H1 (cell line): ENCODE measurements at regions of chr3 and their contacts with region 1.

Region 1: GRCh38 chr3:9749645-9750555 is at the start of gene OGG1:
- DNase-seq: peak; percentile 91 to 93
- H3K4me3 ChIP-seq: peak within 1 kb of the TSS; percentile 73 to 92 (median 88)
- H3K27ac ChIP-seq: peak within 1 kb of the TSS; percentile 88
- H3K4me1 ChIP-seq: peaks cover 0 to 9% (median 6%) of the 10 kb centered on the region in 4 experiments; a peak in 4 of 7 replicates
- H3K27me3 ChIP-seq: no peaks in the 10 kb centered on the region
- CTCF ChIP-seq: peak in 1 of 3 experiments; percentile 1; a peak in 1 of 4 replicates
- EP300 ChIP-seq: no peak
- POLR2A ChIP-seq: peak in 1 of 2 experiments; percentile 82; a peak in 2 of 3 replicates
- RAD21 ChIP-seq: 0 out of 4 replicates have a peak, but pooled peaks of 1 of the 2 experiments have one; percentile 3
- total RNA-seq, gene OGG1: 29.6 and 31.2 TPM in 2 replicates

Region 2: DNA sequence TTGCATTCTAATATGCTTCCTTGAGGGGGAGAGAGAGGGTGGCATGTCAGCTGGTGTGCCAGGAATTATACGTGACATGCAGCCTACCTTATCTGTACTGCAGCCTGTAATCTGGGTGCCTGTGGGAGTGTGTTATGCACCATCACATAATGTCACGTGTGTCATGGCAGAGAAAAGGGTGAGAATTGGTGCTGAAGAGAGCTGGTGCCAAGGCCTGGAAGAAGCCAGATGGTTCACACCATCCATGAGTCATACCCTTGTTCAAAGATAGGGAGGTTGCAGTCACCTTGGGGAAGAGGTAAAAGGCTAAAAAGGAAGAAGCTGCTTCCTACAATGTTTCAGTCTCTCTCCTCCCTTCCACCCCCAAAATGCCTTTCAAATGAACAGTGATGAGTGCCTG is 13.1 kb before region 1 on chr3:
- CTCF ChIA-PET with region 1: interaction called, 11 read pairs
- POLR2A ChIA-PET with region 1: interaction called, 60 read pairs
- DNase-seq: no peak
- H3K4me3 ChIP-seq: no peak overlapping the region
- H3K27ac ChIP-seq: no peak overlapping the region
- H3K4me1 ChIP-seq: peaks cover 0 to 8% (median 6%) of the 10 kb centered on the region in 4 experiments; a peak in 6 of 7 replicates
- H3K27me3 ChIP-seq: 0 out of 7 replicates have a peak, but pooled peaks cover 0 to 2% (median 0%) of the 10 kb centered on the region in 4 experiments
- CTCF ChIP-seq: no peak
- EP300 ChIP-seq: no peak
- POLR2A ChIP-seq: no peak
- RAD21 ChIP-seq: no peak

Region 3: DNA sequence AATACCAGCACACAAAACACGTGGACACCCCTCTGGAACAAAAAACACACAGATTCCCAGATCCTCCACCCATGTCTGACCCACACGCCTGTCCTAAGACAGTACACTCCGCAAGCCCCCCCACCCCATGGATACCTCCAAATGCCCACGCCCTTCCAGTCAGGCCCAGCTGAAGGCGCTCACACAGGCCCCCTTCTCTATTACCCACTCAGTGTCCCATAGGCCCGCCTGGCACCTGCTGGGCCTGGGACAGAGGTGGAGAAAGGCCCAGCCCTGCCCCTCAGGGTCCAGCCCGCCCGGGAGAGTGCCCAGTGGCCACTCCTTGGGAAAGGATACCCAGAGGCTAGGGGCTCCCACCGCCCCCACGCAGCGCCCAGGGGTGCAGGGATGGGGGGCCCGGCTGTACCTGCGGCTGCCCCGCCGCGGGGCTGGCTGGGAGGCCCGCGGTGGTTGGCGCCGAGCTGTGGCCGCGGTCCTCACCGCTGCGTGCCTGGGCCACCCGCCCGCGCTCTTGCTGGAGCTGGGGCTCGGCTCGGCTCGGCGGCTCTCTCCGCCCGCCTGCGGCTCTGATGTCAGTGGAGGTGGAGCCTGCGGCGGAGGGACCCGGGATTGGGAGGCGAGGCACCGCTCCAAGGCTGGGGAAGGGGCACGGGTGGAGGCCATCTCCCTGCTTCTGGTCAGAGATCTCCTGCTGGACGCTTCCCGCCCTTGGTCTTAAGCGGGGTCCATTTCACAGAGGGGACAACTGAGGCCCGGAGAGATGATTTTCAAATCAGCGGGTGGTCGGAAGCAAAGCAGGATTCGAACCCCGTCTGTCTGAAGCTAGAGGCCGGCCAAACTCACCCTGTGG is 19.8 kb after region 1 on chr3 and contains the start of gene CAMK1:
- CTCF ChIA-PET with region 1: interaction called, 5 read pairs
- POLR2A ChIA-PET with region 1: interaction called, 43 read pairs
- DNase-seq: peak in 1 of 2 experiments; percentile 85
- H3K4me3 ChIP-seq: peak within 1 kb of the TSS; percentile 50 to 68 (median 52)
- H3K27ac ChIP-seq: no peak within 1 kb of the TSS
- H3K4me1 ChIP-seq: peaks cover 0 to 10% (median 2%) of the 10 kb centered on the region in 4 experiments; a peak in 1 of 7 replicates
- H3K27me3 ChIP-seq: peaks cover 1 to 28% (median 23%) of the 10 kb centered on the region in 4 experiments; a peak in 6 of 7 replicates
- CTCF ChIP-seq: no peak
- EP300 ChIP-seq: no peak
- POLR2A ChIP-seq: no peak
- RAD21 ChIP-seq: no peak
- total RNA-seq, gene CAMK1: 4.8 and 4.9 TPM in 2 replicates

Region 4: GRCh38 chr3:9809615-9810432 is 59.9 kb after region 1 on chr3 and contains the start of gene TTLL3:
- CTCF ChIA-PET with region 1: no interaction called
- POLR2A ChIA-PET with region 1: interaction called, 11 read pairs
- DNase-seq: peak in 1 of 2 experiments; percentile 88
- H3K4me3 ChIP-seq: peak within 1 kb of the TSS; percentile 50 to 72 (median 58)
- H3K27ac ChIP-seq: peak within 1 kb of the TSS; percentile 3; the same call in 1 of the 2 replicates
- H3K4me1 ChIP-seq: peaks cover 0 to 9% (median 2%) of the 10 kb centered on the region in 4 experiments; a peak in 3 of 7 replicates
- H3K27me3 ChIP-seq: peaks cover 0 to 11% (median 9%) of the 10 kb centered on the region in 4 experiments; a peak in 5 of 7 replicates
- CTCF ChIP-seq: no peak
- EP300 ChIP-seq: no peak
- POLR2A ChIP-seq: no peak; a peak in 1 of 3 replicates
- RAD21 ChIP-seq: no peak
- total RNA-seq, gene TTLL3: 4.3 and 5.9 TPM in 2 replicates